ENCODE measurements at regions of chr12 and their contacts with region 1.

Region 1: GRCh38 chr12:96399919-96400797 is at the start of gene CDK17:
- DNase-seq: no peak
- ATAC-seq: peak; percentile 88
- H3K4me3 ChIP-seq: peak within 1 kb of the TSS; percentile 81 to 93
- H3K27ac ChIP-seq: peak within 1 kb of the TSS; percentile 79
- H3K4me1 ChIP-seq: peaks cover 37% of the 10 kb centered on the region; the same call in 1 of the 2 replicates
- H3K27me3 ChIP-seq: no peaks in the 10 kb centered on the region
- CTCF ChIP-seq: peak; percentile 96
- total RNA-seq, gene CDK17: 23.2 TPM

Region 2: DNA sequence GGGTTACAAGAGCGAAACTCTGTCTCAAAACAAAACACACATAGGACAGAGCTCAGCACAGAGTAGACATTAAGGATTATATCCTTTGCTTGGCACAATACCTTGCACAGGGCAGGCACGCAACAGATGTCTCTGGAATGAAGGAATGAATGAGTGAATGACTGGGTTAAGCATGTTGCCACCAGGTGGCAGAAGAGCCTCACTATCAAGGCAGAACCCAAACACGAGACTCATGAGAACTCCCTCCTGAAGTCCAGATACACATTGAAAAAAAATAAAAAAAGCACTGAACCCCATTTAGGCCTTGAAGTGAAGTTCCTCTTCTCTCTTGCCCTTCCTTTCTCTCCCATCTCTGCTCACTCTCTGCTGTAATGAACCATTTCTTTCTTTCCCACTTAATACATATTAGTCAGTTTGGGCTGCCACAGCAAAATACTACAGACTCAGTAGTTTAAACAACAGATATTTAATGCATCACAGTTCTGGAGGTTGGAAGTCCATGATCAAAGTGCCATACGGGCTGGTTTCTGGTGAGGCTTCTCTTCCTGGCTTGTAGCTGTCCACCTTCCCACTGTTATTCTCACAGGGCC is 338.2 kb before region 1 on chr12:
- CTCF ChIA-PET with region 1: no interaction called
- POLR2A ChIA-PET with region 1: no interaction called
- in situ Hi-C with region 1: no loop called
- intact Hi-C with region 1: loop called (anchors 2 kb)
- DNase-seq: peak; percentile 64
- ATAC-seq: peak; percentile 93
- H3K4me3 ChIP-seq: no peak overlapping the region
- H3K27ac ChIP-seq: no peak overlapping the region
- H3K4me1 ChIP-seq: no peaks in the 10 kb centered on the region
- H3K27me3 ChIP-seq: no peaks in the 10 kb centered on the region
- CTCF ChIP-seq: peak; percentile 83

Region 3: GRCh38 chr12:96186607-96187301 is 213.4 kb before region 1 on chr12:
- CTCF ChIA-PET with region 1: no interaction called
- POLR2A ChIA-PET with region 1: no interaction called
- in situ Hi-C with region 1: no loop called
- intact Hi-C with region 1: no loop called
- DNase-seq: no peak
- ATAC-seq: no peak
- H3K4me3 ChIP-seq: no peak overlapping the region
- H3K27ac ChIP-seq: no peak overlapping the region
- H3K4me1 ChIP-seq: no peaks in the 10 kb centered on the region
- H3K27me3 ChIP-seq: no peaks in the 10 kb centered on the region
- CTCF ChIP-seq: no peak

Region 4: GRCh38 chr12:96219698-96220206 is 180.4 kb before region 1 on chr12:
- CTCF ChIA-PET with region 1: no interaction called
- POLR2A ChIA-PET with region 1: no interaction called
- in situ Hi-C with region 1: no loop called
- intact Hi-C with region 1: loop called (anchors 5 kb)
- DNase-seq: no peak
- ATAC-seq: peak; percentile 96
- H3K4me3 ChIP-seq: peak overlapping the region; percentile 21 to 49
- H3K27ac ChIP-seq: peak overlapping the region; percentile 89
- H3K4me1 ChIP-seq: peaks cover 18% of the 10 kb centered on the region
- H3K27me3 ChIP-seq: no peaks in the 10 kb centered on the region
- CTCF ChIP-seq: no peak

Region 5: GRCh38 chr12:96303653-96304052 is 96.5 kb before region 1 on chr12:
- CTCF ChIA-PET with region 1: interaction called, 5 read pairs
- POLR2A ChIA-PET with region 1: no interaction called
- in situ Hi-C with region 1: no loop called
- intact Hi-C with region 1: loop called (anchors 10 kb)
- DNase-seq: no peak
- ATAC-seq: no peak
- H3K4me3 ChIP-seq: no peak overlapping the region
- H3K27ac ChIP-seq: no peak overlapping the region
- H3K4me1 ChIP-seq: peaks cover 2% of the 10 kb centered on the region; the same call in 1 of the 2 replicates
- H3K27me3 ChIP-seq: no peaks in the 10 kb centered on the region
- CTCF ChIP-seq: no peak

Measured in Panc1 (cell line).